ENCODE measurements at regions of chr1 and their contacts with region 1.

Region 1: DNA sequence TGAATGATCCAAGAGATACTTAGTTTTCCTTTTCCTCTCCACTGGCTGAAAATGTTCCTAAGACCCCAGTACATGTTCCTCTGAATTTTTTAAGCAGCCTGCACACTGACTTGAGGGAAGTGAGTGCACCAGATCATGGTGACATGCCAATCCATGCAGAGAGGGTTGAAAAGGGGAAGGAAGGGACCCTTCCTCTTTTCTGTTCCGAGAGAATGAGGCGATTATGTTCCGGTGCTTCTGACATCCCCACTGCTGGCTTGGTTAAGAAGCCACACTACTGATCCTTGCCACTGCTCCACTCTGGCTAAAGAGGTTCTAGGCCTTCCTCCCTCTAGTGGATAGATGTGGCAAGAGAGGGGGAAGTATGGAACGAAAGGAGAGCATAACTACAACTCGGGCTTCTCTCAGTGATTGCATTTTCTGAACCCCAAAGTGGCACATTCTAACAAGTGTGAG is 1.8 kb upstream of the CYB5R1 start:
- DNase-seq: peak in 5 of 10 donors; percentile 22 to 36 (median 29)
- ATAC-seq: peak; percentile 37 to 40
- H3K4me3 Mint-ChIP-seq: peak overlapping the region in 9 of 10 donors; percentile 12 to 82 (median 39)
- H3K27ac Mint-ChIP-seq: peak overlapping the region in 9 of 10 donors; percentile 31 to 95 (median 77)
- H3K4me1 Mint-ChIP-seq: peaks cover 16 to 43% (median 35%) of the 10 kb centered on the region in 4 donors
- H3K27me3 Mint-ChIP-seq: no peaks in the 10 kb centered on the region

Region 2: GRCh38 chr1:202987922-202988583 is 19.2 kb after region 1 on chr1:
- POLR2A ChIA-PET with region 1: no interaction called
- DNase-seq: no peak
- ATAC-seq: no peak
- H3K4me3 Mint-ChIP-seq: no peak overlapping the region
- H3K27ac Mint-ChIP-seq: no peak overlapping the region
- H3K4me1 Mint-ChIP-seq: peaks cover 0 to 26% (median 0%) of the 10 kb centered on the region in 4 donors
- H3K27me3 Mint-ChIP-seq: peaks cover 0 to 14% (median 12%) of the 10 kb centered on the region in 5 donors

Region 3: GRCh38 chr1:203006948-203007871 is 38.3 kb after region 1 on chr1 and contains the start of gene TMEM183A:
- POLR2A ChIA-PET with region 1: interaction called, 12 read pairs
- DNase-seq: peak; percentile 83 to 98 (median 94)
- ATAC-seq: peak; percentile 92 to 93
- H3K4me3 Mint-ChIP-seq: peak within 1 kb of the TSS; percentile 78 to 98 (median 96)
- H3K27ac Mint-ChIP-seq: peak within 1 kb of the TSS; percentile 94 to 99 (median 98)
- H3K4me1 Mint-ChIP-seq: peaks cover 16 to 47% (median 39%) of the 10 kb centered on the region in 4 donors
- H3K27me3 Mint-ChIP-seq: peaks cover 0 to 1% (median 0%) of the 10 kb centered on the region in 5 donors
- polyA plus RNA-seq, gene TMEM183A: 46.2 to 53.6 (median 47.4) TPM

Measured in naive thymus-derived CD8-positive, alpha-beta T cell (primary cell).